GM12878 (cell line): ENCODE measurements at regions of chr12 and their contacts with region 1.

Region 1: GRCh38 chr12:11771356-11771755 is 121.9 kb downstream of the ETV6 start:
- DNase-seq: no peak
- ATAC-seq: peak; percentile 68
- H3K4me3 ChIP-seq: no peak overlapping the region
- H3K27ac ChIP-seq: peak overlapping the region; percentile 72
- H3K4me1 ChIP-seq: peaks cover 79% of the 10 kb centered on the region
- H3K27me3 ChIP-seq: no peaks in the 10 kb centered on the region
- CTCF ChIP-seq: no peak
- EP300 ChIP-seq: peak in 1 of 2 experiments; percentile 55; a peak in 1 of 4 replicates
- POLR2A ChIP-seq: no peak
- RAD21 ChIP-seq: no peak

Region 2: GRCh38 chr12:11695321-11695720 is 76.0 kb before region 1 on chr12:
- CTCF ChIA-PET with region 1: no interaction called
- POLR2A ChIA-PET with region 1: no interaction called
- RAD21 ChIA-PET with region 1: no interaction called
- SMC1A ChIA-PET with region 1: no interaction called
- in situ Hi-C with region 1: no loop called
- intact Hi-C with region 1: no loop called
- DNase-seq: no peak
- ATAC-seq: no peak
- H3K4me3 ChIP-seq: no peak overlapping the region
- H3K27ac ChIP-seq: no peak overlapping the region
- H3K4me1 ChIP-seq: peaks cover 2% of the 10 kb centered on the region; the same call in 1 of the 2 replicates
- H3K27me3 ChIP-seq: no peaks in the 10 kb centered on the region
- CTCF ChIP-seq: no peak
- EP300 ChIP-seq: no peak
- POLR2A ChIP-seq: no peak
- RAD21 ChIP-seq: no peak

Region 3: GRCh38 chr12:11707535-11707934 is 63.8 kb before region 1 on chr12:
- CTCF ChIA-PET with region 1: no interaction called
- POLR2A ChIA-PET with region 1: no interaction called
- RAD21 ChIA-PET with region 1: no interaction called
- SMC1A ChIA-PET with region 1: no interaction called
- in situ Hi-C with region 1: no loop called
- intact Hi-C with region 1: no loop called
- DNase-seq: no peak
- ATAC-seq: no peak
- H3K4me3 ChIP-seq: no peak overlapping the region
- H3K27ac ChIP-seq: no peak overlapping the region
- H3K4me1 ChIP-seq: peaks cover 12% of the 10 kb centered on the region
- H3K27me3 ChIP-seq: no peaks in the 10 kb centered on the region
- CTCF ChIP-seq: no peak
- EP300 ChIP-seq: no peak
- POLR2A ChIP-seq: no peak
- RAD21 ChIP-seq: no peak

Region 4: DNA sequence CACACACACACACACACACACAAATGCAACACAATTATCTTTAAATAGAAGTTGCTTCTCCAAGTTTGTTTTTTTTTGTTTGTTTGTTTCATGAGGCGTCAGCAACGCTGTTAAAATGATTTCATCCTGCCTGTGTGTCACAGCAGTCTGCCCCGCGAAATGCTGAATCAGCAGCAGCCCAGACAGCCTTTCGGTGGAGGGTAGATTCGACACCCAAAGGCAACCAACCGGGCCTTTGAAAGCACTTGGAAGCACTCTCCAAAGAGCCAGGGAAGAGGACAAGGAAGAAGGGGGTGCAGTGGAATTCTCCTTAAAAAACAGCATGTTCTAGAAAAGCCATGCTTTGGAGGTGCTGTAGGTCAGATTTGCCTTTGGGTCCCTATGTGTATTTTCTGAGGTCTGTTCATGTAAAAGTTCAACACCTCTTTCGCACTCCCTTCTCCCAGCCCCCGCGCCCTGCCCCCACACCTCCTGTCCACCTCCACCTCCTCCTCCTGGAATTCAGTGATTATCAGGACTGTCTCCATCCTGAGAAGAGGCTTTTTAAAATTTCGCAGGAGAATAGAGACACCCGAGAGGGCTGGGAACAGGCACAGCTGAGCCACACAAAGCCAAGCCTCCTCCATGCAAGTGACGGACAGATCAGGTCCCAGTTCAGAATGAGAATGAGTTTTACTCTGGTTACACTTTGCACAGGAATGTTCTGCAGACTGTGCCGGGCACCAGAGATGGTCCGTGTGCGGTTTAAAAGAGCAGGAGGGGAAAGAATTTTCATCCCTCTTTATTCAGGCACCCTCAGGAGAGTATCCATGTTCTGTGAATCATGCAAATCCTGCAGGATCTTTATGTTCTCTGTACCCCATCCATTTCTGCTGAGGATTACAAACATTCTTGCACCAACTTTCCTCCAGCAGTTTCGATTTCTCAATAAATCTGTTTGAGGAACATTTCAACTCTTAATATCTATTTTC is 56.0 kb after region 1 on chr12:
- CTCF ChIA-PET with region 1: no interaction called
- POLR2A ChIA-PET with region 1: interaction called, 7 read pairs
- RAD21 ChIA-PET with region 1: interaction called, 86 read pairs
- SMC1A ChIA-PET with region 1: interaction called, 140 read pairs
- in situ Hi-C with region 1: no loop called
- intact Hi-C with region 1: no loop called
- DNase-seq: no peak
- ATAC-seq: no peak
- H3K4me3 ChIP-seq: no peak overlapping the region
- H3K27ac ChIP-seq: 0 out of 2 replicates have a peak overlapping the region, but pooled peaks have one; percentile 6
- H3K4me1 ChIP-seq: peaks cover 64% of the 10 kb centered on the region
- H3K27me3 ChIP-seq: no peaks in the 10 kb centered on the region
- CTCF ChIP-seq: no peak
- EP300 ChIP-seq: no peak
- POLR2A ChIP-seq: no peak
- RAD21 ChIP-seq: no peak